ENCODE measurements at regions of chr1 and their contacts with region 1.

Region 1: GRCh38 chr1:22641906-22642636 is 1.4 kb upstream of the C1QC start:
- DNase-seq: peak; percentile 91
- ATAC-seq: peak; percentile 72

Region 2: DNA sequence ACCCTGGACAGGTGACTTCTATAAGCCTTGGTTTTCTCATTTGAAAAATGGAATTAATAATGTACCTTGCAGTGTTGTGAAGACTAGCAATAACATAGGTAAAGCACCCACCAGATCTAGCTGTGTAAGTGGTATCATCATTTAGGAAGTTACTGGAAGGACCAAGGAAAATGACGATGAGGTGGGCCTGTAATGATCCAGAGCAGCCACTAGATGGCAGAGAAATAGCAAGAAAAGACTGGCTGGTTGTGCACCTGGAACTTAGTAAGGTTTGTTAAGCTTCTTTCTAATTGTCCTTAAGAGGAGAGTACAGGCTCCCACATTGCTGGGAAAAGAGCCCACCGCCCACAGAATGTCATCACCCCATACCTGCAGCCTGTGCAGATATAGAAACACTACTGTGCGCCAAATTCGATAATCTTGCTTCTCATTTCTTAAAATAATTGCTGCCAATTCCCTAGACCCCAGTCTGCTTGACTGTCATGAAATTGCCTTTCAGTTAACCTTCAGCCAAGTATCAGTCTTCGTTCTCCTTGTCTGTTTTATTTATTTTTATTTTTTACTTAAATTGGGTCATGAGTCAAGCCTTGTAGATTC is 536.4 kb before region 1 on chr1:
- intact Hi-C with region 1: loop called (anchors 10 kb)
- DNase-seq: no peak
- ATAC-seq: no peak

Region 3: DNA sequence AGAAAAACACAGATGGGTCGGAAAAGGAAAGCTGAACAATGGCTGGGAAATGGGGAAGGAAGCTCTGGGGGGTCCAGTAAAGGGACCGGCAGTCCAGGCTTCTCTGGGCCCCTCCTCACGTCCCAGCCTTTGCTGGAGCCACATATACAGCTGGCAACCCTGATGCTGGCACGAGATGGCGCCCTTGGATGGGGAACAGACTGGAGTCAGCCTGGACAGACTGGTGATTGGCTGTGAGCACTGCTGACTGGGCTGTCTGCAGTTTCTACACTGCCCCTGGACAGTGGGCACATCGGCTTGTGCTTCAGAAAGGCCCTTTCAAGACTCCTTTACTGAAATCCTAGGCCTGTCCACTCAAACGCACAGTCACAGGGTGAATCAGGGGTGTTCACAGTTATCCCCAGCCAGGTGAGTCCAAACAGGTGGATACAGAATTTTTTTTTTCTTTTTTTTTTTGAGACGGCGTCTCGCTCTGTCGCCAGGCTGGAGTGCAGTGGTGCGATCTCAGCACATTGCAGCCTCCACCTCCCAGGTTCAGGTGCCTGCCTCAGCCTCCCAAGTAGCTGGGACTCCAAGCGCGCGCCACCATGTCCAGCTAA is 221.5 kb before region 1 on chr1:
- intact Hi-C with region 1: loop called (anchors 1 kb)
- DNase-seq: peak; percentile 88
- ATAC-seq: peak; percentile 88

Region 4: DNA sequence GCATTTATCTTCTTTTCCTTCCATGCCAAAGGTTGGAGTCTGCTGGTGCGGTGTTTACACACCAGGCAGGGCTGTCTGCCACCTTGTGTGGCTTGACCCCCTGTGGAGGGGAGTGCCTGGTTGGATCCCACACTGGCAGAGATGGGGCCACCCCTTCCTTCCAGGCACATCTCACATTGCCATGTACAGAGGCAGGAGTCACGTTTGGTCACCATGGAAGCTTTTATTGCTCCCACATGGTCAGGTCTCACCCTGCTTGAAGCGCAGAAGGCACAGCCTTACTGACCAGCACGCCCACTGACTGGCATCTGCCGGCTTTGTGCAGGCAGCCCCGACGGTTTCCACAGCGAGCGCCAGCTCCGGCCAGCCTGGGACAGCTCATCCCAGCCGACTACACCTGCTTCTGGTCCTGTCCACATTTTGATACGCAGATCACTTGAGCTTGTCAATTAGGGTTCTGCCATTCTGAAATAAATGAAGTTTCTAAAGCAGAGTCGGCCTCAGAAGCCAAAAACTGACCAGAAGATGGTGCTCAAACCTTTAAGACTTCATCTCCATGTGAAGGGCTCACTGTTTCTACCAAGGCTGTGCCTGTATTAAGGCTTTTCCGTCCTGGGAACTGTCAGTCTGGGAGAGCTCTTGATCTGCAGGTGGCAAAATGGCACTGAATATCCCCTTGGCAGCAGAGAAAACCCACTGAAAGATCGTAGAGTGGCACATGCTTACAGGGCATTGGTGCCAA is 114.3 kb before region 1 on chr1:
- intact Hi-C with region 1: loop called (anchors 5 kb)
- DNase-seq: no peak
- ATAC-seq: no peak

Region 5: DNA sequence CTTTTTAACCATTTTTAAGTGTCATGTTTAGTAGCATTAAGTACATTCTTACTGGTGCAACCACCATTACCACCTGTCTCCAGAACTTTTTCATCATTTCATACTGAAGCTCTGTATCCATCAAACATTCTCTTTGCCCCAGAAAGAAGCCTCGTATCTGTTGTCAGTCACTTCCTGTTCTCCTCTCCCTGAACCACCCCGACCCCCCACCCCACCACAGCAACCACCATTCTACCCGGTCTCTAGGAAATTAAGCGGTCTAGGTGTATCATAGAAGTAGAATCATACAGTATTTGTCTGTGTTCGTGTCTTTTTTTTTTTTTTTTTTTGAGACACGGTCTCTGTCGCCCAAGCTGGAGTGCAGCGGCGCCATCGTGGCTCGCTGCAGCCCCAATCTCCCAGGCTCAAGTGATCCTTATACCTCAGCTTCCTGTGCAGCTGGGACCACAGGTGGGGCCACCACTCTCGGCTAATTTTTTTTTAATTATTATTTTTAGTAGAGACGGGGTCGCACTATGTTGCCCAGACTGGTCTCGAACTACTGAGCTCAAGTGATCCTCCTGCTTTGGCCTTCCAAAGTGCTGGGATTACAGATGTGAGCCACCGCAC is 102.5 kb before region 1 on chr1:
- intact Hi-C with region 1: no loop called
- DNase-seq: no peak
- ATAC-seq: no peak

Measured in Right ventricle myocardium inferior (tissue), 1 donor.